ENCODE measurements at regions of chr20 and their contacts with region 1.

Region 1: DNA sequence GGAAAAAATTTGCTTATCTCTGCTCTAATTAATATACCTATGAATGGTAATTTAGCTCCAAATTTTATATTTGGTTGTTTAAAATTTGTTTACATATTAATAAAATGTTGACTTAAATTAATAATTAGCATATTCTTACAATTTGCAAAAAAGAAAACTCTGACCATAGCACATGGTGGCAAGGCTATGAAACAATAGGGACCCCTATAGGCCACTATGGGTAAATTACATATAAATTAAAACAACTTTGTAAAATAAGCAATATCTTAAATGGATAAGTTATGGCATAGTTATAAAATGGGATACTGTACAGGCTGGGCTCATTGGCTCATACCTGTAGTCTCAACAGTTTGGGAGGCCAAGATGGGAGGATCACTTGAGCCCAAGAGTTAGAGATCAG is 76.0 kb downstream of the MKKS start:
- DNase-seq: no peak
- H3K4me3 Mint-ChIP-seq: no peak overlapping the region
- H3K27ac Mint-ChIP-seq: no peak overlapping the region
- H3K4me1 Mint-ChIP-seq: peaks cover 3% of the 10 kb centered on the region
- H3K27me3 Mint-ChIP-seq: peaks cover 9% of the 10 kb centered on the region

Region 2: GRCh38 chr20:10034717-10035571 is 323.0 kb before region 1 on chr20 and contains the start of gene ANKEF1:
- CTCF ChIA-PET with region 1: no interaction called
- intact Hi-C with region 1: loop called (anchors 10 kb)
- DNase-seq: peak; percentile 75
- H3K4me3 Mint-ChIP-seq: peak within 1 kb of the TSS; percentile 66
- H3K27ac Mint-ChIP-seq: no peak within 1 kb of the TSS
- H3K4me1 Mint-ChIP-seq: peaks cover 6% of the 10 kb centered on the region
- H3K27me3 Mint-ChIP-seq: no peaks in the 10 kb centered on the region
- total RNA-seq, gene ANKEF1: 2.8 to 3.2 TPM

Region 3: DNA sequence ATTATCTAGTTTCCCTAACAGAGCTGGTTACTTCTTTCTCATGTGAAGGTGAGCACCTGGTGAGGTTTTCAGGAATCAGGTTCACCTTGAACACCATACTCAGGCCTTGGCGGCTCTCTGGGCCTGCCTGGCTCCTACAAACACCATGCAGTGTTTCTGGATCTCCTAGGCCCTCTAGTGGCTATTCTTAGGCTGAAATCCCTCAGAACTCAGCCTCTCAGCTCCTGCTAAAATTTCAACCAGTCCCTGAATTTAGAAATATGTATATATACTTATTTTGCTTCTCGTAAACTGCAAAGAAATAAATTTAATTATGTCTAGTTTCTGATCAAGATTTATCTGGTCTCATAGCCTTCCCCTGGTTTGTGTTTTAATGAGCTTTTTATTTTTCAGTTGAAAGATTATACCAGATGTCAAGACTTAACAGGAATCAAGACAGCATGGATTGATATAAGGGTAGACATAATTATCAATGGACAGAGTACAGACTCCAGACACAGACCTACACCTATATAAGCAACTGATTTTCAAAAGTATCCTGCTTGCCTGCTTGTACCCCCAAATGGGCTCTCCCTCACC is 267.3 kb before region 1 on chr20:
- CTCF ChIA-PET with region 1: no interaction called
- intact Hi-C with region 1: loop called (anchors 10 kb)
- DNase-seq: peak; percentile 27
- H3K4me3 Mint-ChIP-seq: no peak overlapping the region
- H3K27ac Mint-ChIP-seq: no peak overlapping the region
- H3K4me1 Mint-ChIP-seq: no peaks in the 10 kb centered on the region
- H3K27me3 Mint-ChIP-seq: peaks cover 3% of the 10 kb centered on the region

Region 4: DNA sequence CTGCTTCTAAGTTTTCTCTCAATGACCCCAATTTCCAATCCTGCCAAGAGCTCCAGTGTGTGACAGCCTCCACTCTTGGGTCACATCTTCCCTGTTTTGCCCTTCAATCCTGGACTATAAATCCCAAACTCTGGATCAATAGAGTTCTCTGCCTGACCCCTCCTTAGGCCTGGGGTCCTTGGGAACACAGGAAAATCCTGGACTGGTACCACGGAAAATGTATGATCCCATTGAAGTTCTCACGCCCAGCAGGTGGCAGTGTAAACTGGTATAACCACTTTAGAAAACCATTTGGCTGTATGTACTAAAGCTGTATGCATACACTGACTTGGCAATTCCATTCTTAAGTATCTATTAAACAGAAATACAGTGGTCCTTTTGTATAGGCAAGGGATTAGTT is 41.4 kb before region 1 on chr20:
- CTCF ChIA-PET with region 1: interaction called, 11 read pairs
- intact Hi-C with region 1: loop called (anchors 2 kb)
- DNase-seq: peak; percentile 41
- H3K4me3 Mint-ChIP-seq: no peak overlapping the region
- H3K27ac Mint-ChIP-seq: no peak overlapping the region
- H3K4me1 Mint-ChIP-seq: no peaks in the 10 kb centered on the region
- H3K27me3 Mint-ChIP-seq: peaks cover 25% of the 10 kb centered on the region

Region 5: DNA sequence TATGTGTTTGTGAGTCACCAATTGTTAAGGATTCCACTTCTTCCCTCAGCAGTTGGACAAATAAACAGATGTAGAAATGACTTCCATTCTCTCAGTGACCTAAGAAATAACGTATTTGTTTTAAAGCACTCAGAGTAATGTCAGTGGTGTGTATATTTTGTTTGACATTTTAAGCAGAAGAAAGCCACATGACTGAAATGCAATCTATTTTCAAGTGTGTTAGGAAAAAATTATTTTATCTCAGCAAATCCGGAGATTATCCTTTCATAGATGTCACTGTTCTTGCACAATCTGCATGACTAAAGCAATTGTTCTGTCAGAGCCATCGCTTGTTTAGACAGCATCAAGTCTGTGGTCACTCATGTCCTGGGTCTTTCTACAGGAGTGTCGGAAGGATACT is 238.8 kb after region 1 on chr20:
- CTCF ChIA-PET with region 1: no interaction called
- intact Hi-C with region 1: no loop called
- DNase-seq: no peak
- H3K4me3 Mint-ChIP-seq: no peak overlapping the region
- H3K27ac Mint-ChIP-seq: no peak overlapping the region
- H3K4me1 Mint-ChIP-seq: peaks cover 13% of the 10 kb centered on the region
- H3K27me3 Mint-ChIP-seq: no peaks in the 10 kb centered on the region

Measured in activated naive CD4-positive, alpha-beta T cell treated with anti-CD3 and anti-CD28 coated beads for 36 hours (primary cell).